Activated CD8-positive, alpha-beta T cell treated with anti-CD3 and anti-CD28 coated beads, Interleukin-2, amount 10 ng/mL, durations not matched to agents 7 days and 5 days (primary cell): ENCODE measurements at regions of chr13 and their contacts with region 1.

Region 1: DNA sequence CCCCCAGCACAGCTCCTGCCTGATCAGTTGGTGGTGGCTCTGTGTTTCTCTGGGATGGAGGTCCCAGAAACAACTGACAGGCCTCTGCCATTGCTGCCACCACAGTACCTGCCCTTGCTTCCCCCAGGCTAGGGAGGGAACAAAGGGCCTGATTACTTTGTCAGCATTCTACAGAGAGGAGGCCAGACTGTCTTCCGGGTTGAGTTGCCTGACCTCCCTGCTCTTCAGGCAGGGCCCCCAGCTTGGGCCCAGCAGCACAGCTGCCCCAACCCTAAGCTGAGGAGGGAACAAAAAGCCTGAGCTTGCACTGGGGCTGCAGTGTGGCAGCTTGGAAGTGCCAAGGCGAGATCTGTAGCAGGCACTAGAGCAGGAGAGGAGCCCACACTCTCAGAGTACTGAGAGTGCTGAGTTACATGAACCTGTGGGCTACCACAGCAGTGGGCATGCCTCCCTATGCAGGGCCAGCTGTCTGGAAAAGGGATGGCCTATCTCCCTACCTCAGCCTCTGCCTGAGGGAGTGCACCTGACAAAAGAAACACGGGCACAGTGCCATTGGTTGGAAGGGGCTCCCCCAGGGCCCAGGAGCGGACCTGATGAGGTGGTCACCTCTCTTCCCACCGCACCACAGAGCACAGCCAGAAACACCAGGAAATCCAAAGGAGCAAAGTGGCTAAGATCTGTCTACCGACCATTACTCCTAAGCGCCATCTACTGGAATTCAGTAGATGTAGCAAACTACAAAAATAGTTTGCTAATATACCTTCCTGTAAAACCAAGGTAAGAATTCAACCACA is 24.4 kb downstream of the SLC25A15 start:
- DNase-seq: peak; percentile 25
- ATAC-seq: peak; percentile 75
- H3K4me3 Mint-ChIP-seq: no peak overlapping the region
- H3K27ac Mint-ChIP-seq: no peak overlapping the region
- H3K4me1 Mint-ChIP-seq: peaks cover 3% of the 10 kb centered on the region
- H3K27me3 Mint-ChIP-seq: no peaks in the 10 kb centered on the region

Region 2: GRCh38 chr13:40801255-40802217 is 12.3 kb before region 1 on chr13:
- CTCF ChIA-PET with region 1: interaction called, 10 read pairs
- POLR2A ChIA-PET with region 1: no interaction called
- DNase-seq: no peak
- ATAC-seq: no peak
- H3K4me3 Mint-ChIP-seq: no peak overlapping the region
- H3K27ac Mint-ChIP-seq: no peak overlapping the region
- H3K4me1 Mint-ChIP-seq: peaks cover 10% of the 10 kb centered on the region
- H3K27me3 Mint-ChIP-seq: no peaks in the 10 kb centered on the region